Ovary (tissue), 10 donors: ENCODE measurements at regions of chr20 and their contacts with region 1.

Region 1: GRCh38 chr20:54680872-54681619 is 205.7 kb downstream of the DOK5 start:
- DNase-seq: peak in 4 of 5 donors; percentile 15 to 34 (median 22)
- H3K4me3 ChIP-seq: no peak overlapping the region
- H3K27ac ChIP-seq: no peak overlapping the region
- H3K4me1 ChIP-seq: no peaks in the 10 kb centered on the region
- H3K27me3 ChIP-seq: no peaks in the 10 kb centered on the region
- CTCF ChIP-seq: no peak
- EP300 ChIP-seq: no peak
- POLR2A ChIP-seq: no peak

Region 2: GRCh38 chr20:54017809-54018208 is 663.2 kb before region 1 on chr20:
- intact Hi-C with region 1: no loop called
- DNase-seq: no peak
- H3K4me3 ChIP-seq: no peak overlapping the region
- H3K27ac ChIP-seq: no peak overlapping the region
- H3K4me1 ChIP-seq: peaks cover 1% of the 10 kb centered on the region
- H3K27me3 ChIP-seq: no peaks in the 10 kb centered on the region
- CTCF ChIP-seq: no peak
- EP300 ChIP-seq: no peak
- POLR2A ChIP-seq: no peak

Region 3: DNA sequence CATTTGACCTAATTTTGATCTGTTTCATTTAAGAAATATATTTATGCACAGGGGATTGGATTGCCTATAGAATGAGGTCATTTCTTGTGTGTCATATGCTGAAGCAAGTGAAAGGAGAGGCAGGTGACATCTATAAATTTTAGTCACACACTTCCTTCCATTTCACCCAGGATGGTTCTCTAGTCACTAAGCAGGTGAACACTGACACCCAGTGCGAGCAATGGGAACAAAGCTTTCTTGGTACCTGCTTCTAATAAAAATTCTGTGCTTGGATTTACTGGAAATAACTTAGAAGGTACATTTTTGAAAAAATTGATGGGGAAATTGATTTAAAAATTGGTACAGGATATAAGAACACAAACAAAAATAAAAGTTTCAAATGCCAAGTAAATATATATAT is 1500.5 kb after region 1 on chr20:
- intact Hi-C with region 1: loop called in 1 of 4 experiments (anchors 5 kb)
- DNase-seq: no peak
- H3K4me3 ChIP-seq: no peak overlapping the region
- H3K27ac ChIP-seq: no peak overlapping the region
- H3K4me1 ChIP-seq: no peaks in the 10 kb centered on the region
- H3K27me3 ChIP-seq: no peaks in the 10 kb centered on the region
- CTCF ChIP-seq: no peak
- EP300 ChIP-seq: no peak
- POLR2A ChIP-seq: no peak